ENCODE measurements at regions of chr6 and their contacts with region 1.

Region 1: DNA sequence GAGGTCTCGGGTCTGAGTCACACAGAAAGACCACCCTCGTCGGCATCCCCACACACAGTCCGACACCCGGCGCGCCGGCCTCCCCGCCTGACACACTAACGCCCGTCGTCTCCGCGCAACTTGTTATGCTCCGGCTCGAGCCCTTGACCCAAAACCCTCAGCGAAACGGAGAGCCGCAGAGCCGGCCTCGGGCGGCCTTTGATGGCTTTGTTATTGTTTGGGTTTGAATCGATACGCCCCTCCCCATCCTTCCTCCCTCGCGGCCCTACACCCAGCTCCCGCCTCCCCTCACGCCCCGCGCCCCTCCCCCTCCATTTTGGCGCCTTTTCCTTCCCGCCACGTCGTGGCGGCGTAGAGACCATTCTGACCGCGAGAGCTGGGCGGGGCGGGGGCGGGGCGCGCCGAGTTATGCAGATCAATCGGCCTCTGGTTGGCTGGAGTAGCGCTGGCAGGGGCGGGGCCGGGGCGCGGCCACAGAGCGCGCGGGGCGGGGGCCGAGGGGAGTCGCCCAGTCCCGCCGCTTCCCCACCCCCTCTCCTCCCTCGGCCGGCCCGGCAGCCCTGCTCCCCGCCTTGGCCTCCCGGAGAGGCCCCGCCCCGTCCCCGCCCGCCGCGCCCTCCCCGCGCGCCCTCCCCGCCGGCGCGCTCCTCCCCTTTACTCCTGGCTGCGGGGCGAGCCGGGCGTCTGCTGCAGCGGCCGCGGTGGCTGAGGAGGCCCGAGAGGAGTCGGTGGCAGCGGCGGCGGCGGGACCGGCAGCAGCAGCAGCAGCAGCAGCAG is at the start of gene PIM1:
- DNase-seq: peak; percentile 92
- H3K4me3 Mint-ChIP-seq: peak within 1 kb of the TSS; percentile 93
- H3K27ac Mint-ChIP-seq: peak within 1 kb of the TSS; percentile 98
- H3K4me1 Mint-ChIP-seq: peaks cover 42% of the 10 kb centered on the region
- H3K27me3 Mint-ChIP-seq: peaks cover 2% of the 10 kb centered on the region
- total RNA-seq, gene PIM1: 182 and 192 TPM in 2 replicates

Region 2: GRCh38 chr6:36759148-36759759 is 410.4 kb before region 1 on chr6:
- intact Hi-C with region 1: loop called (anchors 5 kb)
- DNase-seq: peak; percentile 76
- H3K4me3 Mint-ChIP-seq: no peak overlapping the region
- H3K27ac Mint-ChIP-seq: peak overlapping the region; percentile 61
- H3K4me1 Mint-ChIP-seq: peaks cover 49% of the 10 kb centered on the region
- H3K27me3 Mint-ChIP-seq: no peaks in the 10 kb centered on the region

Region 3: GRCh38 chr6:37018198-37019064 is 151.3 kb before region 1 on chr6:
- intact Hi-C with region 1: loop called (anchors 1 kb)
- DNase-seq: peak; percentile 84
- H3K4me3 Mint-ChIP-seq: no peak overlapping the region
- H3K27ac Mint-ChIP-seq: peak overlapping the region; percentile 56
- H3K4me1 Mint-ChIP-seq: peaks cover 58% of the 10 kb centered on the region
- H3K27me3 Mint-ChIP-seq: no peaks in the 10 kb centered on the region

Region 4: GRCh38 chr6:37102279-37103168 is 67.2 kb before region 1 on chr6:
- intact Hi-C with region 1: loop called (anchors 1 kb)
- DNase-seq: peak; percentile 70
- H3K4me3 Mint-ChIP-seq: peak overlapping the region; percentile 56
- H3K27ac Mint-ChIP-seq: peak overlapping the region; percentile 85
- H3K4me1 Mint-ChIP-seq: peaks cover 58% of the 10 kb centered on the region
- H3K27me3 Mint-ChIP-seq: no peaks in the 10 kb centered on the region

Region 5: GRCh38 chr6:37155394-37156312 is 14.0 kb before region 1 on chr6:
- intact Hi-C with region 1: loop called (anchors 1 kb)
- DNase-seq: peak; percentile 52
- H3K4me3 Mint-ChIP-seq: peak overlapping the region; percentile 24
- H3K27ac Mint-ChIP-seq: peak overlapping the region; percentile 81
- H3K4me1 Mint-ChIP-seq: peaks cover 30% of the 10 kb centered on the region
- H3K27me3 Mint-ChIP-seq: no peaks in the 10 kb centered on the region

Region 6: GRCh38 chr6:37207903-37208456 is 38.3 kb after region 1 on chr6:
- intact Hi-C with region 1: loop called (anchors 1 kb)
- DNase-seq: peak; percentile 83
- H3K4me3 Mint-ChIP-seq: peak overlapping the region; percentile 37
- H3K27ac Mint-ChIP-seq: peak overlapping the region; percentile 86
- H3K4me1 Mint-ChIP-seq: peaks cover 61% of the 10 kb centered on the region
- H3K27me3 Mint-ChIP-seq: no peaks in the 10 kb centered on the region

Measured in activated T-helper 1 cell treated with anti-CD3 and anti-CD28 coated beads, Interleukin-12 subunit alpha, Interleukin-12 subunit beta, Interleukin-2, Interleukin-4 antibody, amounts not matched to agents 30 ng/mL and 10 ng/mL and 1 ng/mL, durations not matched to agents 14 hours and 24 hours and 36 hours (primary cell).